MCF 10A (cell line): ENCODE measurements at regions of chr3 and their contacts with region 1.

Region 1: GRCh38 chr3:120417272-120417911 is 33.4 kb downstream of the FSTL1 start:
- DNase-seq: peak; percentile 97
- H3K4me3 Mint-ChIP-seq: peak overlapping the region; percentile 76
- H3K27ac Mint-ChIP-seq: peak overlapping the region; percentile 91
- H3K4me1 Mint-ChIP-seq: peaks cover 28% of the 10 kb centered on the region
- H3K27me3 Mint-ChIP-seq: no peaks in the 10 kb centered on the region
- CTCF ChIP-seq: peak; percentile 89

Region 2: GRCh38 chr3:119891944-119892721 is 525.3 kb before region 1 on chr3:
- CTCF ChIA-PET with region 1: interaction called, 29 read pairs
- POLR2A ChIA-PET with region 1: no interaction called
- intact Hi-C with region 1: no loop called
- DNase-seq: peak; percentile 75
- H3K4me3 Mint-ChIP-seq: no peak overlapping the region
- H3K27ac Mint-ChIP-seq: no peak overlapping the region
- H3K4me1 Mint-ChIP-seq: peaks cover 8% of the 10 kb centered on the region
- H3K27me3 Mint-ChIP-seq: no peaks in the 10 kb centered on the region
- CTCF ChIP-seq: peak; percentile 53

Region 3: DNA sequence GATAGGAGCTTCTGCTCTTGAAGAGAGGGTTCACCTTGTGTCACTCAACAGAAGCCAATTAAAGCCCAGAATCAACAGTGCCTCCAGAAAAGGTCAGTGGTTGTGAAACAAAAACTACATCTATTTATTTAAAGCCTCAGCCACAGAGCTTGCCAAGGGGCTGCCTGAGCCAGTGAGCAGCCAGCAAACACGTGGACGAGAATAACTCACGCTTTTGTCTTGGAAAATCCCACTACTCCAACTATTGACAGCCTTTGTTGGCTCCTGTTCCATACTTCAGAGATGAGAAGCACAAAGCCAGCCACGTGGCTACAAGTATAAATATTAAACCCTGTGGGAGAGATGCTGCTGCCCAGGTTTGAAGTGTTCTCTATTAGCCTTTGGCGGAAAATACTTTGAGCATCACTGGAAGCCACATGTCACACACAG is 142.6 kb before region 1 on chr3:
- CTCF ChIA-PET with region 1: interaction called, 14 read pairs
- POLR2A ChIA-PET with region 1: no interaction called
- intact Hi-C with region 1: no loop called
- DNase-seq: no peak
- H3K4me3 Mint-ChIP-seq: no peak overlapping the region
- H3K27ac Mint-ChIP-seq: no peak overlapping the region
- H3K4me1 Mint-ChIP-seq: no peaks in the 10 kb centered on the region
- H3K27me3 Mint-ChIP-seq: peaks cover 7% of the 10 kb centered on the region
- CTCF ChIP-seq: no peak

Region 4: DNA sequence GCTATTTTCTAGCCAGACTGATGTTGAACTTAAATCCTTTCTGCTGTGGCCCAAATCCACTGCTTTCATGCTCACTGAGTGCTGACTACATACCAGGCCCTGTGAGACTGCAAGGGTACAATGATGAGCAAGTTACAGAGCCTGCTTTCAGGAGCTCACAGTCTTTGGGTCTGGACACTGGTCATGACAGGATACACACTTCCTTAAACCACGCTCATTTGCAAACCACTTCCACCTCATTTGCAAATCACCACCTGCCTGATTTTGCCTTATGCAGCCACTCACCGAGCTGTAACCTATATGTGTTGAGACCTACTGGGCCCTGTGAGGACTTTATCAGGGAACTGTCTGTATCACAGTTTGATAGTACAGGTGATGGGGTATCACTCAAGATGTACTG is 18.0 kb before region 1 on chr3:
- CTCF ChIA-PET with region 1: interaction called, 12 read pairs
- POLR2A ChIA-PET with region 1: no interaction called
- intact Hi-C with region 1: no loop called
- DNase-seq: no peak
- H3K4me3 Mint-ChIP-seq: no peak overlapping the region
- H3K27ac Mint-ChIP-seq: no peak overlapping the region
- H3K4me1 Mint-ChIP-seq: no peaks in the 10 kb centered on the region
- H3K27me3 Mint-ChIP-seq: no peaks in the 10 kb centered on the region
- CTCF ChIP-seq: no peak

Region 5: DNA sequence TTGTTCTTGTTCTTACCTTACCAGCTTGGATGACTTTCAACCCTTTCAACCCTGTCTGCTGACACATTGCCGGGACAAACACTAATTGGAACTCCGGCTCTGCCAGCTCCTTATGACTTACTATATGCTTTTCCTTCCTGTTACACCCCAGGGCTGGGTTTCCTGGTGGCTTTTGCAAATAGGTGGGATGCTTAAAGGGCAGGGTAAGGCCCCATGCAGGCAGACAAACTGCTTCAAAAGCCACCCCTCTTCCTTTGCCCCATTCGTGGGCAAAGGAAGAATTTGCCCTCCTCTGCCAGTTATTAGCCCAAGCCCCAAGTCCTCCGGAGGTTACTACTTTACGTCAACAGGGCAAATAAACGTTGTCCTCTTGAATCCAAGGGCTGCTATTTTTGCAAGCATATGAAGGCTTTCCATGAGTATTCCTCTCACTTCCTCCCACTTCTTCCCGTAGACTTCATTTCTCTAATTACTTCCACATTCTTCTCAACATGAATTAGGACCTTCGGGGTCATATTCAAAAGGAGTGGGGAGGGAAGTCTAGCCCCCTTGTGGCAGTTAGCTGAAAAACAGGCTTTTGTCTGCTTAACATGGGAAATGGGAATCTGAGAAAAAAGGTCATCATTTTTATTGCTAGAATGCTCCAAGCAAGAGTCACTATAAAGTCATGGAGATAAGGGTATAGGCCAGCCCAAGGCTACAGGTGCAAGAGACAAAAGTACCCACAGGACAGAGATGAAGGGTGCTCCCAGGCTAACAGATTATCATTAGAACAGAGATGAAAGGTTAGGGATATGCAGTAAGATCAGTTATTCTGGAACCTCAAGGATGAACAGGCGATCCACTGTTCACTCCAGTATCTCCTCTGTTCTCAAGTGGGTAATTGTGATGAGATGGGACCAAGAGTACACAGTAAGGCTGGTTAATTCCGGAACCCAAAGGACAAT is 89.7 kb after region 1 on chr3:
- CTCF ChIA-PET with region 1: interaction called, 28 read pairs
- POLR2A ChIA-PET with region 1: no interaction called
- intact Hi-C with region 1: loop called (anchors 1 kb)
- DNase-seq: peak; percentile 59
- H3K4me3 Mint-ChIP-seq: no peak overlapping the region
- H3K27ac Mint-ChIP-seq: no peak overlapping the region
- H3K4me1 Mint-ChIP-seq: peaks cover 17% of the 10 kb centered on the region
- H3K27me3 Mint-ChIP-seq: no peaks in the 10 kb centered on the region
- CTCF ChIP-seq: peak; percentile 61

Region 6: GRCh38 chr3:120558771-120559241 is 141.4 kb after region 1 on chr3:
- CTCF ChIA-PET with region 1: interaction called, 429 read pairs
- POLR2A ChIA-PET with region 1: interaction called, 29 read pairs
- intact Hi-C with region 1: loop called (anchors 1 kb)
- DNase-seq: peak; percentile 84
- H3K4me3 Mint-ChIP-seq: peak overlapping the region; percentile 78
- H3K27ac Mint-ChIP-seq: peak overlapping the region; percentile 92
- H3K4me1 Mint-ChIP-seq: peaks cover 22% of the 10 kb centered on the region
- H3K27me3 Mint-ChIP-seq: no peaks in the 10 kb centered on the region
- CTCF ChIP-seq: peak; percentile 97

Region 7: DNA sequence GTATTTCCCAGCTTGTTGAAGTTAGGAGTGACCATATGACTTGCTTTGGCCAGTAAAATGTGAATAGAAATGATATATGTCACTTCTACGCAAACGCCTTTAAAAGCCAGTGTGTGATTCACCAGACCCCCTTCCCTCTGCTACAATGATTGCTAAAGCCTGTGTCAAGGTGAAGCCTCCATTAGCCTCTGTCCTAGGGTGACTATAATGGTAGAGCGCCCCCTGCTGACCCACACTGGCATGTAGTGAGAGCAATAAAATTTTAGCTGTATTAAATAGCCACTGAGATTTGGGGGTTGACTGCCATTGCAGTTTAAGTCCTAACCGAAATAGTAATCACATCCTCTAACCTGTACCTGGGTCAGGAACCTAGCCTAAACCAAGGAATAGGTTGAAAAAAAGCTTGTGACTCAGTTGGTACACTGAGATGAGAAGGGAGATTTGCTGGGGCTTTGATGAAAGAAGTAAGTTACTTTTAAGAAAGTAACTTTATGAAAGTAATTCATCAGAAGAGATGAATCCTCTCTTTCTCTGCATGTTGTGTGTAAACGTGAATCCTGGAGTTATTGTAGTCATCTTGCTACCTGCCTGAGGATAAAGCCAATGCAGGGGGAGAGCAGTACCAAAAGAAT is 377.7 kb after region 1 on chr3:
- CTCF ChIA-PET with region 1: interaction called, 41 read pairs
- POLR2A ChIA-PET with region 1: no interaction called
- intact Hi-C with region 1: loop called (anchors 2 kb)
- DNase-seq: peak; percentile 87
- H3K4me3 Mint-ChIP-seq: no peak overlapping the region
- H3K27ac Mint-ChIP-seq: no peak overlapping the region
- H3K4me1 Mint-ChIP-seq: peaks cover 8% of the 10 kb centered on the region
- H3K27me3 Mint-ChIP-seq: no peaks in the 10 kb centered on the region
- CTCF ChIP-seq: peak; percentile 87

Region 8: DNA sequence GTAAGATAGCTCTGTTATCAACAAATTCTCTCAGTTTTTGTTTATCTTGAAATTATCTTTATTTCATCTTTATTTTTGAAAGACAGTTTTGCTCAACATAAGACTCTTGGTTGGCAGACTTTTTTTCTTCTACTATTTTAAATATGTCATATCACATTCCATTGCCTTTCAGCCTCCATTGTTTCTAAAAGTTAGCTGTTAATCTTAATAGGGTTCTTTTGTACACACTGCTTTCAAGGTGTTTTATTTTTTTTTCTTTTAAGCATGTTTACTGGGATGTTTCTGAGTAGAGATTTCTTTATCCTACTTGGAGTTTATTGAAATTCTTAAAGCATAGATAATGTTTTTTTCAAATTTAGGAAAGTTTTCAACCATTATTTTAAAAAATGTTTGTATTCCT is 785.2 kb after region 1 on chr3:
- CTCF ChIA-PET with region 1: no interaction called
- POLR2A ChIA-PET with region 1: no interaction called
- intact Hi-C with region 1: no loop called
- DNase-seq: no peak
- H3K4me3 Mint-ChIP-seq: no peak overlapping the region
- H3K27ac Mint-ChIP-seq: no peak overlapping the region
- H3K4me1 Mint-ChIP-seq: no peaks in the 10 kb centered on the region
- H3K27me3 Mint-ChIP-seq: no peaks in the 10 kb centered on the region
- CTCF ChIP-seq: no peak